ENCODE measurements at regions of chrX and their contacts with region 1.

Region 1: GRCh38 chrX:30504309-30504708 is 73.3 kb downstream of the TASL start:
- DNase-seq: no peak
- ATAC-seq: no peak
- H3K4me3 Mint-ChIP-seq: no peak overlapping the region
- H3K27ac Mint-ChIP-seq: no peak overlapping the region
- H3K4me1 Mint-ChIP-seq: no peaks in the 10 kb centered on the region
- H3K27me3 Mint-ChIP-seq: no peaks in the 10 kb centered on the region
- CTCF ChIP-seq: no peak

Region 2: DNA sequence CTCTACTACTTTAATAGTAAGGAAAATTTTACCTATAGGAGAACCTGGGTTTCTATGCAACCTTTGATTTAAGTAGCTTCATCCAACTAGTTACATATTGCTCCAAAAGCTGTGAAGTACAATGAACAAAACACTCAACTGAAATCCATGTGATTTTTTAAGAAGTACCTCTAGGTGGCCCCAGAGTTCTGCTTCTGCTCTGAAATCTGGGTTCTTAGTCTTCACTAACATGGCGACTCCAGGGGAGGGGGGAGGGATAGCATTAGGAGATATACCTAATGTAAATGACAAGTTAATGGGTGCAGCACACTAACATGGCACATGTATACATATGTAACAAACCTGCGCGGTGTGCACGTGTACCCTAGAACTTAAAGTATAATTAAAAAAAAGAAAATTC is 362.3 kb before region 1 on chrX:
- CTCF ChIA-PET with region 1: no interaction called
- POLR2A ChIA-PET with region 1: no interaction called
- intact Hi-C with region 1: loop called (anchors 10 kb)
- DNase-seq: no peak
- ATAC-seq: no peak
- H3K4me3 Mint-ChIP-seq: no peak overlapping the region
- H3K27ac Mint-ChIP-seq: no peak overlapping the region
- H3K4me1 Mint-ChIP-seq: no peaks in the 10 kb centered on the region
- H3K27me3 Mint-ChIP-seq: no peaks in the 10 kb centered on the region
- CTCF ChIP-seq: no peak

Region 3: GRCh38 chrX:30275498-30275897 is 228.8 kb before region 1 on chrX:
- CTCF ChIA-PET with region 1: no interaction called
- POLR2A ChIA-PET with region 1: no interaction called
- intact Hi-C with region 1: loop called (anchors 5 kb)
- DNase-seq: no peak
- ATAC-seq: no peak
- H3K4me3 Mint-ChIP-seq: no peak overlapping the region
- H3K27ac Mint-ChIP-seq: no peak overlapping the region
- H3K4me1 Mint-ChIP-seq: no peaks in the 10 kb centered on the region
- H3K27me3 Mint-ChIP-seq: no peaks in the 10 kb centered on the region
- CTCF ChIP-seq: no peak